ENCODE measurements at regions of chr17 and their contacts with region 1.

Region 1: GRCh38 chr17:7583253-7584109 is at the start of gene MPDU1:
- DNase-seq: peak; percentile 91 to 98 (median 95)
- ATAC-seq: peak; percentile 84 to 89
- H3K4me3 Mint-ChIP-seq: peak within 1 kb of the TSS; percentile 88 to 100 (median 99)
- H3K27ac Mint-ChIP-seq: peak within 1 kb of the TSS; percentile 96 to 100 (median 100)
- H3K4me1 Mint-ChIP-seq: peaks cover 30 to 69% (median 61%) of the 10 kb centered on the region in 4 donors
- H3K27me3 Mint-ChIP-seq: no peaks in the 10 kb centered on the region
- polyA plus RNA-seq, gene MPDU1: 33.9 to 48.9 (median 41.3) TPM

Region 2: GRCh38 chr17:7219812-7220581 is 363.5 kb before region 1 on chr17 and contains the starts of genes ACADVL and DLG4:
- POLR2A ChIA-PET with region 1: no interaction called
- DNase-seq: peak; percentile 61 to 86 (median 68)
- ATAC-seq: peak; percentile 64 to 71
- H3K4me3 Mint-ChIP-seq: peak within 1 kb of the TSS; percentile 88 to 97 (median 94)
- H3K27ac Mint-ChIP-seq: peak within 1 kb of the TSS; percentile 90 to 99 (median 98)
- H3K4me1 Mint-ChIP-seq: peaks cover 33 to 64% (median 57%) of the 10 kb centered on the region in 4 donors
- H3K27me3 Mint-ChIP-seq: no peaks in the 10 kb centered on the region
- polyA plus RNA-seq, gene ACADVL: 78.8 to 91.2 (median 85.2) TPM
- polyA plus RNA-seq, gene DLG4: 0.24 to 0.62 (median 0.33) TPM

Region 3: GRCh38 chr17:7413346-7413985 is 170.0 kb before region 1 on chr17:
- POLR2A ChIA-PET with region 1: no interaction called
- DNase-seq: no peak
- ATAC-seq: no peak
- H3K4me3 Mint-ChIP-seq: no peak overlapping the region
- H3K27ac Mint-ChIP-seq: peak overlapping the region in 1 of 10 donors; percentile 19
- H3K4me1 Mint-ChIP-seq: peaks cover 5 to 15% (median 6%) of the 10 kb centered on the region in 4 donors
- H3K27me3 Mint-ChIP-seq: peaks cover 0 to 2% (median 0%) of the 10 kb centered on the region in 5 donors

Region 4: DNA sequence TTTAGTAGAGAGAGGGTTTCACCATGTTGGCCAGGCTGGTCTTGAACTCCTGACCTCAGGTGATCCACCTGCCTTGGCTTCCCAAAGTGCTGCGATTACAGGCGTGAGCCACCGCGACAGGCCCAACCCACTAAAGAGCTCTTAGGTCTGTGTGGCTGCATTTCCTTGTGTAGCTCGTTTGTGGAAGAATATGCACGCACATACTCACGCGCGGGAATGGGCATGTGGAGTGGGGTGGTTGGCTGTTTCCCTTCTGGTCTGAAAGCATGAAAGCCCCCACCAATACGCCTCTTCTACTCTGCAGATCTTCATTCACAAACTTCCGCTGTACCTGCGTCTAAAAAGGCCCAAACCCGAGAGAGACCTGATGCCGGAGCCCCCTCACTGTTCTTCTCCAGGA is 128.5 kb before region 1 on chr17:
- POLR2A ChIA-PET with region 1: interaction called, 13 read pairs
- DNase-seq: no peak
- ATAC-seq: peak in 1 of 2 donors; percentile 55
- H3K4me3 Mint-ChIP-seq: peak overlapping the region; percentile 87 to 99 (median 96)
- H3K27ac Mint-ChIP-seq: peak overlapping the region; percentile 86 to 98 (median 92)
- H3K4me1 Mint-ChIP-seq: peaks cover 19 to 45% (median 23%) of the 10 kb centered on the region in 4 donors
- H3K27me3 Mint-ChIP-seq: no peaks in the 10 kb centered on the region

Region 5: GRCh38 chr17:7515911-7516610 is 67.4 kb before region 1 on chr17:
- POLR2A ChIA-PET with region 1: no interaction called
- DNase-seq: no peak
- ATAC-seq: no peak
- H3K4me3 Mint-ChIP-seq: no peak overlapping the region
- H3K27ac Mint-ChIP-seq: peak overlapping the region in 1 of 10 donors; percentile 58
- H3K4me1 Mint-ChIP-seq: peaks cover 0 to 2% (median 0%) of the 10 kb centered on the region in 4 donors
- H3K27me3 Mint-ChIP-seq: no peaks in the 10 kb centered on the region

Region 6: DNA sequence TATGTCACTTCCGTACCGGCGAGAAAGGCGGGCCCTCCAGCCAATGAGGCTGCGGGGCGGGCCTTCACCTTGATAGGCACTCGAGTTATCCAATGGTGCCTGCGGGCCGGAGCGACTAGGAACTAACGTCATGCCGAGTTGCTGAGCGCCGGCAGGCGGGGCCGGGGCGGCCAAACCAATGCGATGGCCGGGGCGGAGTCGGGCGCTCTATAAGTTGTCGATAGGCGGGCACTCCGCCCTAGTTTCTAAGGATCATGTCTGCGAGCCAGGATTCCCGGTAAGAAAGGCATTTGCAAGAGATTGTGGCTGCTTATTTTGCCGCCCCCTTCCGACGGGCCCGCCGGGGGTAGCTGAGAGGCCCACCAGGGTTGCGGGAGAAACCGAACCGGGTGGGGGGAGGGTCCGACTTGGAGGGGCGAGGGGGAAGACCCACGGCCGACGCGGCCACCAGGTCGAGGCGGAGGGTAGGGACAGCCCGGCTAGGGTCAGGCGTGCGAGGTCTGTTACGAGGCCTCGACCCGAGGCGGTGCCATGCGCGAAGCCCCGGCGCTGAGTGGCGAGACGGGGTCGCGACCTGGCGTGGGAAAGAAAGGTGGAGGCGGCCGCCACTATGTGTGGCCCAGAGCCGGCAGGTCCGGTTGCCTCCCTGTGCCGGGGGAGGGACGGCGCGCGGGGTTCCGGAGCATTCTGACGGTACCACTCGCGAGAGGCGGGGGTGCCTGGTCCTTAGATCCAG is 10.7 kb before region 1 on chr17:
- POLR2A ChIA-PET with region 1: interaction called, 129 read pairs
- DNase-seq: peak; percentile 97 to 100 (median 100)
- ATAC-seq: peak; percentile 12 to 85
- H3K4me3 Mint-ChIP-seq: peak overlapping the region; percentile 91 to 100 (median 98)
- H3K27ac Mint-ChIP-seq: peak overlapping the region; percentile 95 to 100 (median 99)
- H3K4me1 Mint-ChIP-seq: peaks cover 19 to 51% (median 44%) of the 10 kb centered on the region in 4 donors
- H3K27me3 Mint-ChIP-seq: no peaks in the 10 kb centered on the region

Region 7: GRCh38 chr17:7614422-7615264 is 31.2 kb after region 1 on chr17 and contains the start of gene FXR2:
- POLR2A ChIA-PET with region 1: interaction called, 37 read pairs
- DNase-seq: peak; percentile 96 to 100 (median 98)
- ATAC-seq: peak; percentile 83 to 85
- H3K4me3 Mint-ChIP-seq: peak within 1 kb of the TSS; percentile 85 to 97 (median 92)
- H3K27ac Mint-ChIP-seq: peak within 1 kb of the TSS; percentile 82 to 99 (median 97)
- H3K4me1 Mint-ChIP-seq: peaks cover 20 to 41% (median 37%) of the 10 kb centered on the region in 4 donors
- H3K27me3 Mint-ChIP-seq: no peaks in the 10 kb centered on the region
- polyA plus RNA-seq, gene FXR2: 11.8 to 17.8 (median 12.4) TPM

Region 8: DNA sequence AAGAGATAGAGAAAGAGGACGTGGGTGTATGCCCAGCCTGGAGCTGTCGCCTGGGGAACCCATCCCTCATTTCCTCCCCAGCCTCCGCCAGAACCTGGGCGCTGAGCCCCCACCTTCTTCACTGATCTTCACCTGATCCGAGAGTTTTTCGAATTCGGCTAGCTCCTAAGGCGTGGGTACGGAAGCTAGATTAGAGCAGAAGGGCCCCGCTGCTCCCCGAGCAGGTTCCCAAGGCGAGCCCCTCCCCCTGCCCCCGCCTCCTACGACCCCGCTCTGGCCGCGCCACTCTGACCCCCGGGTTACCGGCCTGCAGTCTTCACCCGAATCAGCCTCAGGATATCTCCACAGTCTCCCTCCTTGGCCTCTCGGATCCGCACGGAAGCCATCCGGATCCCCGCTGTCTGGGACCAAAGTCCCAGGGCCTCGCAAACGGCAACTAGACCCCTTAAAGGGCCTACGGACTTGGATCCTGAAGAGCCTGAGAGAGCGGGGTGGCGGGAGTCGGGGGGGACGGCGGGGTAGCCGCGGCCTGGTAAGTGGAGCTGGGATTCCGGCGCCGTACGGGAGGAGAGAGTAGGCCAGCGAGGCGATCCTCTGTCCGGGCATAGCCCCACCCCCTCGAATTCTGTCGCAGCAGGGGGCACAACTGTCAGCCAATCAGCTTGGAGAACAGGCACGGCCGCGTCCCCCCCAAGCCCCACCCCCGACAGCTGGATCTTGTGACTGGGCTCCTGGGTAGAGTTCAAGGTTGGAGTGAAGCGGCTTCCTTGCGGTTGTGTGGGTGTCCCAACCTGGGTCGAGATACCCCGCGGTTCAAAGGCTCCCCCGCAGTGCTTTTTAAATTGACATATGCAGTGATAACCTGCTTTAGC is 44.0 kb after region 1 on chr17 and contains the start of gene SAT2:
- POLR2A ChIA-PET with region 1: interaction called, 14 read pairs
- DNase-seq: peak; percentile 75 to 95 (median 80)
- ATAC-seq: peak; percentile 93 to 95
- H3K4me3 Mint-ChIP-seq: peak within 1 kb of the TSS; percentile 90 to 97 (median 94)
- H3K27ac Mint-ChIP-seq: peak within 1 kb of the TSS; percentile 79 to 98 (median 94)
- H3K4me1 Mint-ChIP-seq: peaks cover 7 to 18% (median 16%) of the 10 kb centered on the region in 4 donors
- H3K27me3 Mint-ChIP-seq: no peaks in the 10 kb centered on the region
- polyA plus RNA-seq, gene SAT2: 38.5 to 40.0 (median 39.4) TPM

Region 9: DNA sequence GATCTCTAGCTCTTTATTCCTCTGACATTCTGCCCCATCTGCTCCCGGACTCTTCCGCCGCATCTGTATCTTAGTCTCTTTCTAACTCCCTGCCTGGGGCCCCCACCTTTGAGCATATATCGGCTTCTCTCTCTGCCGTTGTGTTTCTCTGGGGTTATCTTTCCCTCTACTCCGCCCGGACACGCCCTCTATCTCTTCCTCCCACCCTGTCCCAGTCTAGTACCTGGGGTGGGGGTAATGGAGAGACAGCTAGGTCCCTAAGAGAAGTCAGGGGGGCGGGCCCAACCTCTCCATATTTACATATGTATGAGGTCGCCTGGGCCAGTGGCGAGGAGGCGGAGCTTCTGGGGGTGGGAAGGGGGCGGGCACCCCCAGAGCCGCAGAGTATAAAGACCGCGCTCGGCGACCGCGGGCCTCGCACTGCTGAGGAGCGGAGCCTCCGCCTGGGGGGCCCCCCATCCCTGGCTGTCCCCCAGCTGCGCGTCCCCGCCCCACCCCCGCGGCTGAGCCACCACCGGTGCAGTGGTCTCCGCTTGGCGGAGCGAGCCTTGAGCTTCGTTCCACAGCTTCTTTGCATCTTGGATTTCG is 67.1 kb after region 1 on chr17 and contains the start of gene ATP1B2:
- POLR2A ChIA-PET with region 1: interaction called, 10 read pairs
- DNase-seq: peak; percentile 57 to 91 (median 74)
- ATAC-seq: peak; percentile 90 to 91
- H3K4me3 Mint-ChIP-seq: peak within 1 kb of the TSS; percentile 80 to 98 (median 90)
- H3K27ac Mint-ChIP-seq: peak within 1 kb of the TSS in 9 of 10 donors; percentile 4 to 84 (median 72)
- H3K4me1 Mint-ChIP-seq: peaks cover 16 to 22% (median 19%) of the 10 kb centered on the region in 4 donors
- H3K27me3 Mint-ChIP-seq: peaks cover 3 to 27% (median 8%) of the 10 kb centered on the region in 5 donors
- polyA plus RNA-seq, gene ATP1B2: 0.17 to 0.57 TPM in 2 of 3 donors, not detected in the other

Measured in naive thymus-derived CD8-positive, alpha-beta T cell (primary cell).